GM10248 (cell line): ENCODE measurements at regions of chr19 and their contacts with region 1.

Region 1: GRCh38 chr19:17932485-17933338 is at the start of gene CCDC124:
- DNase-seq: peak; percentile 93
- CTCF ChIP-seq: peak; percentile 99

Region 2: DNA sequence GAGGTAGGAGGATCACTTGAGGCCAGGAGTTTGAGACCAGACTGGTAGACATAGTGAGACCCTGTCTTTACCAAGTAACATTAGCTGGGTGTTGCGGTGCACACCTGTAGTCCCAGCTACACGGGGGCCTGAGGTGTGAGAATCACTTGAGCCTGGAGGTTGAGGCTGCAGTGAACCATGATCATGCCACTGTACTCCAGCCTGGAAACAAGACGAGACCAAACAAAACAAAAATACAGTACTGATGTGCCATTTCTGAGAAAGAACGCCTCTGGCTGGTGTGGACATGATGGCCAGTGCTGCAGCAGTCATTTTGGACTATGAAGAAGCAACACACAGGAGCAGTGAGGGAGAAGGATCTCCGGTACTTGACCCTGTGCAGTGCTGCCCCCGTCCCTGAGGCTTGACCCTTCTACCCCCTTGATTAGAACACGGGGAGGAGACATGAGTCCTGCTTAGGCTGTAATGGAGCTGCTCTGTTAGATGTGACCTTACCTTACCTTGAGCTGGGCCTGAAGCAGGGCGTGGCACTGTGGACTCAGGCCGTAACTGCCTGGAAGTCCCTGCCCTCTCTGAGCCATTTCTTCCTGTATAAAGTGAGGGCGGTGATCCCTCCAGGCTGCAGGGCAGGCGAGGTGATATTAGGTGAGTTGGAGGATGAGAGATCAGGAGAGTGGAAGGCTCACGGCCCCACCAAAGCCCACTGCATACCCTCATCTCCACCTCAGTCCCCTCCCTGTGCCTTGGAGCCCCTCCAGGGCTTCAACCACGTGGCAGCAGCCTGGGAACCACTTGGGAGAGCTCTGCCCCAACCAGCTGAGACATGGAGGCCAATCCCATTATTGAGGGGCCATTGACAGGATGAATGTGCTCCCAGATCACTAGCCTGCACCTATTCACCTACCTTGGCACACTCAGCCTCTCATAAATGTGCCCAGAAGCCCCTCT is 67.1 kb before region 1 on chr19:
- CTCF ChIA-PET with region 1: interaction called, 124 read pairs
- POLR2A ChIA-PET with region 1: interaction called, 6 read pairs
- DNase-seq: no peak
- CTCF ChIP-seq: no peak

Region 3: GRCh38 chr19:17871878-17872250 is 60.8 kb before region 1 on chr19 and contains the start of gene SLC5A5:
- CTCF ChIA-PET with region 1: interaction called, 93 read pairs
- POLR2A ChIA-PET with region 1: interaction called, 3 read pairs
- DNase-seq: no peak
- CTCF ChIP-seq: no peak

Region 4: DNA sequence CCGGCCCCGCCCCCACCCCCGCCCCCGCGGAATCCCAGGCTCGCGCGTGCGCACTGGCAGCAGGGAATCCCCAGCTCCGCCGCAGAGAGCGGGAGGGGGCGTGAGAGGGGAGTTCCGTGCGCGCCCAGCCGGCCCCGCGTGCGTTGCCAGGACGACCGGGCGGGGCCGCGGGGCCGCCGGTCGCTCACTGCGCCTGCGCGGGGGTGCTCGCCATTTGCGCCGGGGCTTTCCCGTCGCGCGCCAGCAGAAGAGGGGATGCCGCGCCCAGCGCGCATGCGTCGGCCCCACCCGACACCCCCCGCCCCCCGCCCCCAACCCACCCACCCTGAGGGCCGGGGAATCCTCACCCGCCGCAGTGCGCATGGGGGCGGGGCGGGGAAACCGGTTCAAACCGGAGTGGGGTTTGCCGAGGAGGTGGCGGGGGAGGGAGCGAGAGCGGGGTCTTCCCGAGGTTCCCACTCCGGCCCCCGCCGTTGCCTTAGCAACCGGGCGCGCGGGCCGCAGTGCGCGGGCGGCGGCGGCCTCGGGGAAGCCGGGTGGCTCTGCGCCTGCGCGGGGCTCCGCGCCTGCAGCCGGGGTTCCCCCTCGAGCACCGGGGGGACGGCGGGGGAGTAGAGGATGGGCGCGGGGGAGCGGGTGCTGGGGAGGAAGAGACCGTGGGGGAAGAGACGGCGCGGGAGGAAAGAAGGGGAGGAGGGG is 15.3 kb after region 1 on chr19:
- CTCF ChIA-PET with region 1: interaction called, 39 read pairs
- POLR2A ChIA-PET with region 1: no interaction called
- DNase-seq: peak; percentile 99
- CTCF ChIP-seq: no peak